CD8-positive, alpha-beta T cell (primary cell): ENCODE measurements at regions of chr3 and their contacts with region 1.

Region 1: DNA sequence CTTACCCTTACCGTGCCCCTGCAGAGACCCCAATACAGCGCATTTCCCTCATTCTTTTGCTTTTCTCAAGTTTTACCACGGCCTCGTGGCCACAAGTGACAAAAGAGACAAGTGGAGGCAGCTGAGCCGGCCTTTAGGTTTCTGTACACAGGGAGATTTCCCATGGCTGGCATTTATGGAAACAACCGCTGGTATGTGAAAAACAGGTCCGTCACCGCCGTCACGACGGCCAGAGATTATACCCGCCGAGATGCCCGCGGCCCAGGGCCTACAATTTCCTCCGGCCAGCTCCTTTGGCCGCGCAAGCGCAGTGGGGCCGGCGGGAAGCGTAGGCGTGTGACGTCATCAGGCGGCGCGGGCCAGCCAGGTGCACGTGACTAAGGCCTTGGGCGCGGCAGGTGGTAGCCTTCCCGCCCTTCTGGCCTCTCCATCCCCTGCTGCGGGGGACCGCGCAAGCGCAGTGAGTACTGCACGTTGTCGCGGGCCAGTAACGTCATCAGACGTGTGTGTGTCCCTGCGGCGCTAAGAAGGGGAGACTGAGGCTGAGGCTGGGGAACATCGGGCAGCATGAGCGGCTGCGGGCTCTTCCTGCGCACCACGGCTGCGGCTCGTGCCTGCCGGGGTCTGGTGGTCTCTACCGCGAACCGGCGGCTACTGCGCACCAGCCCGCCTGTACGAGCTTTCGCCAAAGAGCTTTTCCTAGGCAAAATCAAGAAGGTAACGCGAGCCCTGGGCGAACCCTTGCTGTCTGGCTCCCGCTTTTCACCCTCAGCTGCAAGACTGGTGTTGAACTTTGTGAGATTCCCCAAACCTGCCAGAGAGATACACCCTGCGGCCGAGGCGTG is at the start of gene ACAD9:
- DNase-seq: peak; percentile 90 to 99 (median 96)
- ATAC-seq: peak; percentile 90
- H3K4me3 ChIP-seq: peak within 1 kb of the TSS; percentile 75 to 92
- H3K4me3 Mint-ChIP-seq: peak within 1 kb of the TSS; percentile 85
- H3K27ac ChIP-seq: peak within 1 kb of the TSS; percentile 93 to 100
- H3K27ac Mint-ChIP-seq: peak within 1 kb of the TSS; percentile 96
- H3K4me1 ChIP-seq: peaks cover 56% of the 10 kb centered on the region
- H3K4me1 Mint-ChIP-seq: peaks cover 74% of the 10 kb centered on the region
- H3K27me3 ChIP-seq: no peaks in the 10 kb centered on the region
- H3K27me3 Mint-ChIP-seq: no peaks in the 10 kb centered on the region
- CTCF ChIP-seq: no peak
- total RNA-seq, gene ACAD9: 43.1 to 47.1 TPM

Region 2: GRCh38 chr3:128617557-128618397 is 261.6 kb before region 1 on chr3:
- CTCF ChIA-PET with region 1: interaction called, 6 read pairs
- POLR2A ChIA-PET with region 1: no interaction called
- intact Hi-C with region 1: loop called (anchors 1 kb)
- DNase-seq: peak; percentile 97 to 100 (median 99)
- ATAC-seq: peak; percentile 95
- H3K4me3 ChIP-seq: peak overlapping the region; percentile 70 to 85
- H3K4me3 Mint-ChIP-seq: peak overlapping the region; percentile 93
- H3K27ac ChIP-seq: peak overlapping the region; percentile 78 to 88
- H3K27ac Mint-ChIP-seq: peak overlapping the region; percentile 96
- H3K4me1 ChIP-seq: peaks cover 16% of the 10 kb centered on the region
- H3K4me1 Mint-ChIP-seq: peaks cover 28% of the 10 kb centered on the region
- H3K27me3 ChIP-seq: no peaks in the 10 kb centered on the region
- H3K27me3 Mint-ChIP-seq: no peaks in the 10 kb centered on the region
- CTCF ChIP-seq: peak; percentile 92

Region 3: DNA sequence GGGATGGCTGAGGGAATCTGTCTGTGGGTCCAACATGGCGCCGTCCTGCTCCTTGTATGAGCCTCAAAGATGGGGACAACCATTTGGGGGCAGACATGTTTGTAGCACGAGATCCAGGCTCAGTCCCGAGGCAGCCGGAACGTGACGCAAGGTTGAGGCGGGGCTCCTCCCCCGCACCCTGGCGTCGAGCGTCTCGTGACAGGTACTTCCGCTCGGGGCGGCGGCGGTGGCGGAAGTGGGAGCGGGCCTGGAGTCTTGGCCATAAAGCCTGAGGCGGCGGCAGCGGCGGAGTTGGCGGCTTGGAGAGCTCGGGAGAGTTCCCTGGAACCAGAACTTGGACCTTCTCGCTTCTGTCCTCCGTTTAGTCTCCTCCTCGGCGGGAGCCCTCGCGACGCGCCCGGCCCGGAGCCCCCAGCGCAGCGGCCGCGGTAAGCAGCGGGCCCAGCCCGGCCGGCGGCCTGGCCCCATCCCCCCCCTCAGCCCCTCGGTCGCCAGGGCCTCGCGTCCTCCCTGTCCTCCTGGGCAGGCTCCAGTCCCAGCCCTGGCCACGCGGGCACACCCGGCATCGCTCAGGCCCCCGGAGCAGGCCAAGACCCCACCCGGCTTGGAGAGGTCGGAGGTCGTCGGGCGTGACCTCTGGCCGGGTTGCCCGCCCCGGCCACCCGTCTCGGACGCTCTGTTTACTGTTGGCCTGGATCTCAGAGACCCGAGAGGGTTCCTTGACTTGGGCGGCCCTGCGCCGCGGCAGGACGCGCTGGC is 153.2 kb before region 1 on chr3 and contains the start of gene RAB7A:
- CTCF ChIA-PET with region 1: no interaction called
- POLR2A ChIA-PET with region 1: interaction called, 3 read pairs
- intact Hi-C with region 1: loop called (anchors 1 kb)
- DNase-seq: peak; percentile 95 to 99 (median 97)
- ATAC-seq: peak; percentile 98
- H3K4me3 ChIP-seq: peak within 1 kb of the TSS; percentile 82 to 83
- H3K4me3 Mint-ChIP-seq: peak within 1 kb of the TSS; percentile 97
- H3K27ac ChIP-seq: peak within 1 kb of the TSS; percentile 92
- H3K27ac Mint-ChIP-seq: peak within 1 kb of the TSS; percentile 95
- H3K4me1 ChIP-seq: peaks cover 41% of the 10 kb centered on the region
- H3K4me1 Mint-ChIP-seq: peaks cover 53% of the 10 kb centered on the region
- H3K27me3 ChIP-seq: no peaks in the 10 kb centered on the region
- H3K27me3 Mint-ChIP-seq: no peaks in the 10 kb centered on the region
- CTCF ChIP-seq: no peak
- total RNA-seq, gene RAB7A: 130 to 134 TPM

Region 4: GRCh38 chr3:128775912-128776542 is 103.3 kb before region 1 on chr3:
- CTCF ChIA-PET with region 1: no interaction called
- POLR2A ChIA-PET with region 1: no interaction called
- intact Hi-C with region 1: no loop called
- DNase-seq: no peak
- ATAC-seq: no peak
- H3K4me3 ChIP-seq: no peak overlapping the region
- H3K4me3 Mint-ChIP-seq: no peak overlapping the region
- H3K27ac ChIP-seq: no peak overlapping the region
- H3K27ac Mint-ChIP-seq: peak overlapping the region; percentile 49
- H3K4me1 ChIP-seq: peaks cover 16% of the 10 kb centered on the region
- H3K4me1 Mint-ChIP-seq: peaks cover 74% of the 10 kb centered on the region
- H3K27me3 ChIP-seq: no peaks in the 10 kb centered on the region
- H3K27me3 Mint-ChIP-seq: no peaks in the 10 kb centered on the region
- CTCF ChIP-seq: no peak

Region 5: GRCh38 chr3:128867200-128868125 is 11.9 kb before region 1 on chr3:
- CTCF ChIA-PET with region 1: interaction called, 10 read pairs
- POLR2A ChIA-PET with region 1: interaction called, 3 read pairs
- intact Hi-C with region 1: no loop called
- DNase-seq: no peak
- ATAC-seq: no peak
- H3K4me3 ChIP-seq: no peak overlapping the region
- H3K4me3 Mint-ChIP-seq: no peak overlapping the region
- H3K27ac ChIP-seq: no peak overlapping the region
- H3K27ac Mint-ChIP-seq: no peak overlapping the region
- H3K4me1 ChIP-seq: no peaks in the 10 kb centered on the region
- H3K4me1 Mint-ChIP-seq: peaks cover 1% of the 10 kb centered on the region
- H3K27me3 ChIP-seq: no peaks in the 10 kb centered on the region
- H3K27me3 Mint-ChIP-seq: no peaks in the 10 kb centered on the region
- CTCF ChIP-seq: no peak

Region 6: GRCh38 chr3:129026728-129027543 is 147.6 kb after region 1 on chr3:
- CTCF ChIA-PET with region 1: no interaction called
- POLR2A ChIA-PET with region 1: no interaction called
- intact Hi-C with region 1: loop called in 1 of 2 experiments (anchors 2 kb)
- DNase-seq: peak; percentile 85 to 98 (median 91)
- ATAC-seq: peak; percentile 98
- H3K4me3 ChIP-seq: peak overlapping the region; percentile 58 to 61
- H3K4me3 Mint-ChIP-seq: peak overlapping the region; percentile 85
- H3K27ac ChIP-seq: peak overlapping the region; percentile 75 to 80
- H3K27ac Mint-ChIP-seq: peak overlapping the region; percentile 99
- H3K4me1 ChIP-seq: peaks cover 22% of the 10 kb centered on the region
- H3K4me1 Mint-ChIP-seq: peaks cover 26% of the 10 kb centered on the region
- H3K27me3 ChIP-seq: no peaks in the 10 kb centered on the region
- H3K27me3 Mint-ChIP-seq: no peaks in the 10 kb centered on the region
- CTCF ChIP-seq: peak; percentile 84

Region 7: DNA sequence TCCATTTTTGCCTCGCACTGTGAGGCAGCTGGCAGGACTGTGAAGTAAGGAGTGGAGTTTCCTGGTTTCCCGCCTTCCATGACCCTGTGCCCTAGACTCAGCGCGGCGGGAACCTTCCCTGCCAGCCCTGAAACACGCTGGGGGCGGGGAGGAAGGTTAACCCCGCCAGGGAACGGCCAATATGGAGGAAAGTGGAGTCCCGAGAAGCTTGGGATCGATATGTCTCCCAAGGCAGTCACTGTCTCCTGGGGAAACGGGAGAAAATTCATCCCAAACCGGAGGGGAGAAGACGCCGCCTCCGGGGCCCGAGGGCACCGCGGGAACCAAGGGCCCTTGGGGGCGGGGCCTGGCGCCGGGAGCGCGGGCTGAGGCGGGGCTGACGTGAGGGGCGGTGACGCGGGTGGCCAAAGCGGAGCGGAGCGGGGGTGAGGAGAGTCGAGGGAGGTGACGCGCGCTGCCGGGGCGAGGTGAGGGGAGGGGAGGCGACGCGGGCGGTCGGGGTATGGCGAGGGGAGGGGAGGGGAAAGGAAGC is 399.2 kb after region 1 on chr3 and contains the start of gene HMCES:
- CTCF ChIA-PET with region 1: no interaction called
- POLR2A ChIA-PET with region 1: no interaction called
- intact Hi-C with region 1: loop called in 1 of 2 experiments (anchors 2 kb)
- DNase-seq: peak; percentile 88 to 98 (median 96)
- ATAC-seq: peak; percentile 94
- H3K4me3 ChIP-seq: peak within 1 kb of the TSS; percentile 59 to 92
- H3K4me3 Mint-ChIP-seq: peak within 1 kb of the TSS; percentile 95
- H3K27ac ChIP-seq: peak within 1 kb of the TSS; percentile 88 to 93
- H3K27ac Mint-ChIP-seq: peak within 1 kb of the TSS; percentile 97
- H3K4me1 ChIP-seq: peaks cover 39% of the 10 kb centered on the region
- H3K4me1 Mint-ChIP-seq: peaks cover 42% of the 10 kb centered on the region
- H3K27me3 ChIP-seq: no peaks in the 10 kb centered on the region
- H3K27me3 Mint-ChIP-seq: no peaks in the 10 kb centered on the region
- CTCF ChIP-seq: no peak
- total RNA-seq, gene HMCES: 69.5 to 78.7 TPM